CD4-positive, alpha-beta T cell (primary cell): ENCODE measurements at regions of chr2 and their contacts with region 1.

Region 1: DNA sequence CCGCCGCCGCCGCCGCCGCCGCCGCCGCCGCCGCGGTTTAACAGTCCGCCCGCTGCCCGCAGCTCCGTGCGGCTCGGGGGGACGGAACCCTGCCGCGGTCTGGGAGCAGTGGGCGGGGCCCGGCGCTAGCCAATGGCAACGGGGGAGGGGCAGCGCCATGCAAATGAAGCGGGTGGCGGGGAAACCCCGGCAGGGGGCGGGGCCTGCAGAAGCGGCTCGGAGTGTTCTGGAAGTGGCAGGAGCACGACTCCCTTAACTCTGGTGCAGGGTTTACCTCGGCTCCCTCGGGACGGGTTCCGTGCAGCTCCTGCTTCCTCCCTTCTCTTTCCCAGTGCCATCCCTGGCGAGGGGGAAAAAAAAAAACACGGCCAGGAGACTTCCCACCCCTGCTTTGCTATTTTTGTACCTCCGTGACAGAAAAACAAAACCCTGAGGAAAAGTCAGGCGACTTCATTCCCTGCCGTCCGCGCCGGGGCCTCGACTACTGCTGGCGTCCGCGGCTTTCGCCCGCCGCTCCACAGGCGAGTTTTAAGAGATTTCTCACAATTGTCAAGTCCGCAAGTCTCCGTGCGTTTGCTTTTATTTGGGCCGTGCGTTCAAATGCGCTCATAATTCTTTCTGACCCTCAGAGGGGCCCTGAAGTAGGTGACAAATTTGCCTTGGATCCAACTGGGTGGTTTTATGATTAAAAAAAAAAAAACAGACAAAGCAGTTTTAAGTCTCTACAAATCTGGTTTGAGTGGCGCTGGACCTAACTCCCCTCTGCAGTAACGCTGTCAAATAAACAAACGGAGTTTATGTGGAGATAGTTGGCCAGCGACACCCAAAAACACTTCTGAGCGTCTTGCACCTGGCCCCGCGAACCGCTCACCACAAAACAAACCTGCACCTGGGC is at the start of gene KANSL1L:
- DNase-seq: peak; percentile 90 to 99 (median 96)
- ATAC-seq: peak; percentile 83
- H3K4me3 ChIP-seq: peak within 1 kb of the TSS; percentile 76
- H3K4me3 Mint-ChIP-seq: peak within 1 kb of the TSS; percentile 97
- H3K27ac ChIP-seq: peak within 1 kb of the TSS; percentile 84 to 87
- H3K27ac Mint-ChIP-seq: peak within 1 kb of the TSS; percentile 95
- H3K4me1 ChIP-seq: peaks cover 14% of the 10 kb centered on the region
- H3K4me1 Mint-ChIP-seq: peaks cover 42% of the 10 kb centered on the region
- H3K27me3 ChIP-seq: no peaks in the 10 kb centered on the region
- H3K27me3 Mint-ChIP-seq: no peaks in the 10 kb centered on the region
- CTCF ChIP-seq: no peak
- total RNA-seq, gene KANSL1L: 6.7 to 7.0 TPM

Region 2: GRCh38 chr2:208265801-208266552 is 1905.6 kb before region 1 on chr2 and contains the start of gene PIKFYVE:
- CTCF ChIA-PET with region 1: no interaction called
- POLR2A ChIA-PET with region 1: no interaction called
- intact Hi-C with region 1: loop called in 1 of 2 experiments (anchors 5 kb)
- DNase-seq: peak; percentile 66 to 94 (median 83)
- ATAC-seq: peak; percentile 74
- H3K4me3 ChIP-seq: peak within 1 kb of the TSS; percentile 90
- H3K4me3 Mint-ChIP-seq: peak within 1 kb of the TSS; percentile 96
- H3K27ac ChIP-seq: peak within 1 kb of the TSS; percentile 54 to 83
- H3K27ac Mint-ChIP-seq: peak within 1 kb of the TSS; percentile 96
- H3K4me1 ChIP-seq: peaks cover 23% of the 10 kb centered on the region
- H3K4me1 Mint-ChIP-seq: peaks cover 55% of the 10 kb centered on the region
- H3K27me3 ChIP-seq: no peaks in the 10 kb centered on the region
- H3K27me3 Mint-ChIP-seq: no peaks in the 10 kb centered on the region
- CTCF ChIP-seq: no peak
- total RNA-seq, gene PIKFYVE: 29.3 to 29.9 TPM

Region 3: GRCh38 chr2:210002158-210003157 is 169.1 kb before region 1 on chr2 and contains the start of gene RPE:
- CTCF ChIA-PET with region 1: no interaction called
- POLR2A ChIA-PET with region 1: interaction called, 5 read pairs
- intact Hi-C with region 1: loop called (anchors 1 to 2 kb)
- DNase-seq: peak; percentile 94 to 100 (median 97)
- ATAC-seq: peak; percentile 98
- H3K4me3 ChIP-seq: peak within 1 kb of the TSS; percentile 88
- H3K4me3 Mint-ChIP-seq: peak within 1 kb of the TSS; percentile 90
- H3K27ac ChIP-seq: peak within 1 kb of the TSS; percentile 63 to 70
- H3K27ac Mint-ChIP-seq: peak within 1 kb of the TSS; percentile 88
- H3K4me1 ChIP-seq: peaks cover 23% of the 10 kb centered on the region
- H3K4me1 Mint-ChIP-seq: peaks cover 75% of the 10 kb centered on the region
- H3K27me3 ChIP-seq: no peaks in the 10 kb centered on the region
- H3K27me3 Mint-ChIP-seq: no peaks in the 10 kb centered on the region
- CTCF ChIP-seq: no peak
- total RNA-seq, gene RPE: 11.3 TPM

Region 4: GRCh38 chr2:210147614-210148013 is 23.9 kb before region 1 on chr2:
- CTCF ChIA-PET with region 1: no interaction called
- POLR2A ChIA-PET with region 1: no interaction called
- intact Hi-C with region 1: no loop called
- DNase-seq: no peak
- ATAC-seq: no peak
- H3K4me3 ChIP-seq: no peak overlapping the region
- H3K4me3 Mint-ChIP-seq: no peak overlapping the region
- H3K27ac ChIP-seq: no peak overlapping the region
- H3K27ac Mint-ChIP-seq: no peak overlapping the region
- H3K4me1 ChIP-seq: no peaks in the 10 kb centered on the region
- H3K4me1 Mint-ChIP-seq: no peaks in the 10 kb centered on the region
- H3K27me3 ChIP-seq: no peaks in the 10 kb centered on the region
- H3K27me3 Mint-ChIP-seq: no peaks in the 10 kb centered on the region
- CTCF ChIP-seq: no peak

Region 5: GRCh38 chr2:210215120-210215519 is 43.6 kb after region 1 on chr2:
- CTCF ChIA-PET with region 1: no interaction called
- POLR2A ChIA-PET with region 1: no interaction called
- intact Hi-C with region 1: no loop called
- DNase-seq: no peak
- ATAC-seq: no peak
- H3K4me3 ChIP-seq: no peak overlapping the region
- H3K4me3 Mint-ChIP-seq: no peak overlapping the region
- H3K27ac ChIP-seq: no peak overlapping the region
- H3K27ac Mint-ChIP-seq: no peak overlapping the region
- H3K4me1 ChIP-seq: no peaks in the 10 kb centered on the region
- H3K4me1 Mint-ChIP-seq: no peaks in the 10 kb centered on the region
- H3K27me3 ChIP-seq: peaks cover 6 to 8% of the 10 kb centered on the region in 2 experiments
- H3K27me3 Mint-ChIP-seq: peaks cover 12% of the 10 kb centered on the region
- CTCF ChIP-seq: no peak

Region 6: GRCh38 chr2:210435439-210435838 is 263.9 kb after region 1 on chr2:
- CTCF ChIA-PET with region 1: no interaction called
- POLR2A ChIA-PET with region 1: no interaction called
- intact Hi-C with region 1: loop called in 1 of 2 experiments (anchors 5 kb)
- DNase-seq: no peak
- ATAC-seq: no peak
- H3K4me3 ChIP-seq: no peak overlapping the region
- H3K4me3 Mint-ChIP-seq: no peak overlapping the region
- H3K27ac ChIP-seq: no peak overlapping the region
- H3K27ac Mint-ChIP-seq: no peak overlapping the region
- H3K4me1 ChIP-seq: no peaks in the 10 kb centered on the region
- H3K4me1 Mint-ChIP-seq: no peaks in the 10 kb centered on the region
- H3K27me3 ChIP-seq: no peaks in the 10 kb centered on the region
- H3K27me3 Mint-ChIP-seq: no peaks in the 10 kb centered on the region
- CTCF ChIP-seq: no peak

Region 7: DNA sequence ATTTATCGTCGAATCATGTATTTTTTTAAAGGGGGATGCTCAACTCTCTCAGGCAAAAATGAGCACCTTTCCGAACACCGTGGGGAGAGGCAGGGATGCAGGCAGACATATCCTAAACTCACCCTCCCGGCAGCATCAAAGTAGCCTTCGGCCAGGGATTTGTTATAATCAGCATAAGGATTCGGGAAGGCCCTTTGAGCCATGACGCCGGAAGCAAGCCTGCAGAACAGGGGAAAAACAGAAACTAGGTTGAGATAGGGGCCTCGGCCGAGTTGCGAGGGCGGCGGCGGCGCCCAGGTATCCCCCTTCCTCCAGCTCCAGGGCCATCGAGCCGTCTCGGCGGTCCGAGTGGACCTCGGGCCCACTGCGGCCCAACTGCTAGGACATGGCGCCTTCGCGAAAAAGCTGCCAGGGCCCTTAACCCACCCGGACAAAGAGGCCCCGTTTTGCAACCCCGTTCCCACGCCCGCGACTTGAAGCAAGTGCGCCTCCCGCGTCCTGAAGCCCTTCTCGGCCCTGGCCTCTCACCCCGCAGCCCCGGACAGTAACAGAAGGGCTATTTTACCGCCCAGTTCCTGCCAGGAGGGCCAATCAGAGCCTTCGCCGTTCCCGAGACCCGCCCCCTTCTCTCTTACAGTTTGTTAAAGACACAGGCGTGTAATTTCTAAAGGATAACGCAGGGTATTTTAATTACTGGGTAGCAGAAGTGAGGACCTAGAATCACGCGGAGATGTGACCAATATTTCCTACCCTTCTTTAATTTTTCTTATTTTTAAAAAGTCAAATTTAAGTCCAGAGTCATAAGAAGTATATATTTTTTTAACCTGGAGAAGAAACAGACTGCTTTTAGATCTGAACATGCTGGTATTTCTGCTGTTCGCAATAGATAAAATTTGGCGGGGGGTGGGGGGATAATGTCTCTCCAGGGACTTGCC is 304.9 kb after region 1 on chr2 and contains the start of gene LANCL1:
- CTCF ChIA-PET with region 1: no interaction called
- POLR2A ChIA-PET with region 1: no interaction called
- intact Hi-C with region 1: loop called (anchors 2 to 10 kb)
- DNase-seq: peak; percentile 61 to 90 (median 73)
- ATAC-seq: peak; percentile 98
- H3K4me3 ChIP-seq: peak within 1 kb of the TSS; percentile 96
- H3K4me3 Mint-ChIP-seq: peak within 1 kb of the TSS; percentile 100
- H3K27ac ChIP-seq: peak within 1 kb of the TSS; percentile 79 to 94
- H3K27ac Mint-ChIP-seq: peak within 1 kb of the TSS; percentile 97
- H3K4me1 ChIP-seq: peaks cover 18% of the 10 kb centered on the region
- H3K4me1 Mint-ChIP-seq: peaks cover 70% of the 10 kb centered on the region
- H3K27me3 ChIP-seq: no peaks in the 10 kb centered on the region
- H3K27me3 Mint-ChIP-seq: no peaks in the 10 kb centered on the region
- CTCF ChIP-seq: no peak
- total RNA-seq, gene LANCL1: 22.4 to 23.3 TPM